ENCODE measurements at regions of chr11 and their contacts with region 1.

Region 1: GRCh38 chr11:65540297-65541092 is 15.6 kb downstream of the SCYL1 start:
- DNase-seq: peak; percentile 37
- H3K4me3 ChIP-seq: peak overlapping the region; percentile 18
- H3K27me3 ChIP-seq: no peaks in the 10 kb centered on the region
- CTCF ChIP-seq: peak; percentile 82

Region 2: GRCh38 chr11:65530157-65530496 is 10.4 kb before region 1 on chr11:
- CTCF ChIA-PET with region 1: interaction called, 27 read pairs
- POLR2A ChIA-PET with region 1: interaction called, 3 read pairs
- DNase-seq: no peak
- H3K4me3 ChIP-seq: no peak overlapping the region
- H3K27me3 ChIP-seq: no peaks in the 10 kb centered on the region
- CTCF ChIP-seq: peak; percentile 44

Region 3: GRCh38 chr11:65558002-65558931 is 17.8 kb after region 1 on chr11 and contains the start of gene LTBP3:
- CTCF ChIA-PET with region 1: interaction called, 31 read pairs
- POLR2A ChIA-PET with region 1: no interaction called
- DNase-seq: no peak
- H3K4me3 ChIP-seq: peak within 1 kb of the TSS; percentile 70
- H3K27me3 ChIP-seq: no peaks in the 10 kb centered on the region
- CTCF ChIP-seq: 0 out of 2 replicates have a peak, but pooled peaks have one; percentile 2
- polyA plus RNA-seq, gene LTBP3: 37.9 and 77.7 TPM in 2 replicates

Region 4: GRCh38 chr11:65588199-65589054 is 47.9 kb after region 1 on chr11:
- CTCF ChIA-PET with region 1: interaction called, 134 read pairs
- POLR2A ChIA-PET with region 1: no interaction called
- DNase-seq: no peak
- H3K4me3 ChIP-seq: no peak overlapping the region
- H3K27me3 ChIP-seq: no peaks in the 10 kb centered on the region
- CTCF ChIP-seq: peak; percentile 58

Measured in BJ (cell line).